ENCODE measurements at regions of chr9 and their contacts with region 1.

Region 1: GRCh38 chr9:124771021-124771866 is at the start of gene NR6A1:
- DNase-seq: peak; percentile 95
- ATAC-seq: peak; percentile 94
- H3K4me3 Mint-ChIP-seq: peak within 1 kb of the TSS; percentile 82
- H3K27ac Mint-ChIP-seq: peak within 1 kb of the TSS; percentile 88
- H3K4me1 Mint-ChIP-seq: peaks cover 48% of the 10 kb centered on the region
- H3K27me3 Mint-ChIP-seq: peaks cover 58% of the 10 kb centered on the region
- total RNA-seq, gene NR6A1: 0.18 to 0.26 TPM

Region 2: GRCh38 chr9:124716808-124717207 is 54.4 kb before region 1 on chr9:
- CTCF ChIA-PET with region 1: no interaction called
- POLR2A ChIA-PET with region 1: no interaction called
- DNase-seq: no peak
- ATAC-seq: no peak
- H3K4me3 Mint-ChIP-seq: no peak overlapping the region
- H3K27ac Mint-ChIP-seq: no peak overlapping the region
- H3K4me1 Mint-ChIP-seq: no peaks in the 10 kb centered on the region
- H3K27me3 Mint-ChIP-seq: peaks cover 18% of the 10 kb centered on the region

Region 3: GRCh38 chr9:124818431-124819281 is 47.4 kb after region 1 on chr9:
- CTCF ChIA-PET with region 1: interaction called, 10 read pairs
- POLR2A ChIA-PET with region 1: no interaction called
- DNase-seq: peak; percentile 39
- ATAC-seq: peak; percentile 72
- H3K4me3 Mint-ChIP-seq: no peak overlapping the region
- H3K27ac Mint-ChIP-seq: no peak overlapping the region
- H3K4me1 Mint-ChIP-seq: peaks cover 19% of the 10 kb centered on the region
- H3K27me3 Mint-ChIP-seq: peaks cover 4% of the 10 kb centered on the region

Region 4: GRCh38 chr9:124894741-124895170 is 123.5 kb after region 1 on chr9:
- CTCF ChIA-PET with region 1: interaction called, 11 read pairs
- POLR2A ChIA-PET with region 1: no interaction called
- DNase-seq: peak; percentile 69
- ATAC-seq: peak; percentile 90
- H3K4me3 Mint-ChIP-seq: no peak overlapping the region
- H3K27ac Mint-ChIP-seq: peak overlapping the region; percentile 61
- H3K4me1 Mint-ChIP-seq: peaks cover 18% of the 10 kb centered on the region
- H3K27me3 Mint-ChIP-seq: no peaks in the 10 kb centered on the region

Measured in activated CD8-positive, alpha-beta T cell treated with anti-CD3 and anti-CD28 coated beads, Interleukin-2, amount 10 ng/mL, durations not matched to agents 7 days and 5 days (primary cell).